ENCODE measurements at regions of chr1 and their contacts with region 1.

Region 1: DNA sequence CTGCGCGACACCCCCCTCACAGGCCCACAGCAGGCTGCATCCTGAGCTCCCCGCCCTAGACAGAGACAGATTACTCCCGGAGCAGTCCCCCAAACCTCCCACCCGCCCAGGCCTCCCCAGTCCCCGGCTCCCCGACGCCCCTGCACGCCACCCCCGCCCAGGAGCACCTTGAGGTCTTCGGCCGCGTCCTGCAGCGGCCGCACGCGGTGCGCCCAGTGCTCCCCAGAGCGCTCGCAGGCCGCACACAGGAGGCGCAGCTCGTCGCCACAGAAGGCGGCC is 709 bp downstream of the TRIM11 start:
- DNase-seq: no peak
- ATAC-seq: no peak
- H3K4me3 ChIP-seq: peak overlapping the region; percentile 38 to 89 (median 81)
- H3K4me3 Mint-ChIP-seq: peak overlapping the region; percentile 92
- H3K27ac ChIP-seq: peak overlapping the region in 1 of 2 donors; percentile 83
- H3K27ac Mint-ChIP-seq: peak overlapping the region; percentile 81
- H3K4me1 ChIP-seq: peaks cover 27 to 39% of the 10 kb centered on the region in 2 donors
- H3K4me1 Mint-ChIP-seq: peaks cover 47% of the 10 kb centered on the region
- H3K27me3 ChIP-seq: no peaks in the 10 kb centered on the region
- H3K27me3 Mint-ChIP-seq: no peaks in the 10 kb centered on the region
- CTCF ChIP-seq: no peak

Region 2: GRCh38 chr1:228041316-228041715 is 364.6 kb before region 1 on chr1:
- CTCF ChIA-PET with region 1: no interaction called
- POLR2A ChIA-PET with region 1: interaction called, 12 read pairs
- intact Hi-C with region 1: no loop called
- DNase-seq: no peak
- ATAC-seq: no peak
- H3K4me3 ChIP-seq: no peak overlapping the region
- H3K4me3 Mint-ChIP-seq: no peak overlapping the region
- H3K27ac ChIP-seq: no peak overlapping the region
- H3K27ac Mint-ChIP-seq: no peak overlapping the region
- H3K4me1 ChIP-seq: peaks cover 6 to 15% of the 10 kb centered on the region in 2 donors
- H3K4me1 Mint-ChIP-seq: peaks cover 2% of the 10 kb centered on the region
- H3K27me3 ChIP-seq: peaks cover 0 to 31% (median 18%) of the 10 kb centered on the region in 4 experiments
- H3K27me3 Mint-ChIP-seq: peaks cover 17% of the 10 kb centered on the region
- CTCF ChIP-seq: no peak

Region 3: DNA sequence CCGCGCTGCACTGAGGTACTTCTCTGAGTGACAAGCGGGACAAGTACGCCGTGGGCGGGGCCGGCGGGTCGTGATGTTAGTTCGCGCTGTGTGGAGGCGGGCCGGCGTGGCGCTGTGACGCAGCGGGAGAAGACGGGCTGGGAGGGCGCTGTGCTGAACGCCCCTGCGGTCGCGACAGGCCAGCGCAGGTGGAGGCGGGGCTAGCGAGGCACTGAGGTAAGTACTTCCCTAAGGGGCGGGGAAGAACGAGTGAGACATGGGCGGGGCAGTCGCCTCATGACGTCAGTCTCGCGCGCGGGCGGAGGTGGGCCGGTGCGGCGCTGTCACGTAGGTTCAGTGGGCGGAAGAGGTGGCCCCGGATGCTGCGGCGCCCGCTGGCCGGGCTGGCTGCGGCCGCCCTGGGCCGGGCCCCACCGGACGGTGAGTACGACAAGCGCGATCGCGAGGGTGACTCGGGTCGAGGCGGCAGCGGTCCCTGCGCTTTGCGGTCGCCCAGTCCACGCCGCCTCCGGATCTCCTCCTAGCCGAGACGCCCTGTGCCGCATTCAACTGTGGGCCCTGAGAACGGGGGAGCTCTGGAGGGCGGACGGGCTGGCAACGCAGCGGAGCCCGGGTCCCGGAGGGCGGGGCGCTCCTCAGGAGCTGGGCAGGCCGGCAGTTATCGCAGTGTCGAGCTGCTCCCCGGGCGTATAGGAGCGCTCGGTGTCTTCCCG is 265.8 kb before region 1 on chr1 and contains the start of gene GUK1:
- CTCF ChIA-PET with region 1: no interaction called
- POLR2A ChIA-PET with region 1: interaction called, 3 read pairs
- intact Hi-C with region 1: loop called (anchors 2 kb)
- DNase-seq: peak; percentile 100
- ATAC-seq: peak; percentile 91
- H3K4me3 ChIP-seq: peak within 1 kb of the TSS; percentile 70 to 87 (median 82)
- H3K4me3 Mint-ChIP-seq: peak within 1 kb of the TSS; percentile 96
- H3K27ac ChIP-seq: peak within 1 kb of the TSS; percentile 95 to 98
- H3K27ac Mint-ChIP-seq: peak within 1 kb of the TSS; percentile 100
- H3K4me1 ChIP-seq: peaks cover 55 to 74% of the 10 kb centered on the region in 2 donors
- H3K4me1 Mint-ChIP-seq: peaks cover 68% of the 10 kb centered on the region
- H3K27me3 ChIP-seq: no peaks in the 10 kb centered on the region
- H3K27me3 Mint-ChIP-seq: no peaks in the 10 kb centered on the region
- CTCF ChIP-seq: no peak
- total RNA-seq, gene GUK1: 123 and 125 TPM in 2 replicates

Region 4: DNA sequence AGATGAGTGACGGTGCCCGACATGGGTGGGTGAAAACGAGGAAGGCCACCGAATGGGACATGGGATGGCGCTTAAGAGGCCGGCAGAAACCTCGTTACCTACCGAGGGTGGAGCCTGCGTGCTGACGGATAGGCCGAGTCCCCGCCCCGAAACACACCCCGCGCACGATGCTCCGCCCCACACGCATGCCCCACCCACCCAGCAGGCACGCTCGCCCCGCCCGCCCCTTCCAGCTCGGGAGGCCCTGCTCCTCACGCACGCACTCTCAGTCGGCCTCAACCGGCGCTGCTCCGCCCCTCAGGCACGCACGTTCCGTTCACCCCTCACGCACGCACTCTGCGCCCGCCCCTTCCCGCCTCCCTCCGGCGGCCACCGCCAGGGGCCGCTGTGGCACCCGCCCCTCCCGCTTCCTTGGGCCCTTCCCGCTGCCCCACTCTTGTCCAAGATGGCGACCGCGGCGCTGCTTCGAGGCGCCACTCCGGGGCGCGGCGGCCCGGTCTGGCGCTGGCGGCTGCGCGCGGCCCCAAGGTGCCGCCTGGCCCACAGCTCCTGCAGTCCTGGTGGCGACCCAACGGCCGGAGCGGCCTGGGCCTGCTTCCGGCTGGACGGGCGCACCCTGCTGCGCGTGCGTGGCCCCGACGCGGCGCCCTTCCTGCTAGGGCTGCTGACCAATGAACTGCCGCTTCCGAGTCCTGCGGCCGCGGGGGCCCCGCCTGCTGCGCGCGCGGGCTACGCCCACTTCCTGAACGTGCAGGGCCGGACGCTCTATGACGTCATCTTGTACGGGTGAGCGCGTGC is 240.4 kb before region 1 on chr1 and contains the start of gene IBA57:
- CTCF ChIA-PET with region 1: interaction called, 3 read pairs
- POLR2A ChIA-PET with region 1: interaction called, 12 read pairs
- intact Hi-C with region 1: loop called (anchors 2 kb)
- DNase-seq: peak; percentile 100
- ATAC-seq: peak; percentile 84
- H3K4me3 ChIP-seq: peak within 1 kb of the TSS; percentile 64 to 88 (median 74)
- H3K4me3 Mint-ChIP-seq: peak within 1 kb of the TSS; percentile 93
- H3K27ac ChIP-seq: peak within 1 kb of the TSS; percentile 95 to 98
- H3K27ac Mint-ChIP-seq: peak within 1 kb of the TSS; percentile 99
- H3K4me1 ChIP-seq: peaks cover 14 to 26% of the 10 kb centered on the region in 2 donors
- H3K4me1 Mint-ChIP-seq: peaks cover 28% of the 10 kb centered on the region
- H3K27me3 ChIP-seq: peaks cover 0 to 5% (median 0%) of the 10 kb centered on the region in 4 experiments
- H3K27me3 Mint-ChIP-seq: no peaks in the 10 kb centered on the region
- CTCF ChIP-seq: peak; percentile 73
- total RNA-seq, gene IBA57: 12.8 and 15.3 TPM in 2 replicates

Region 5: GRCh38 chr1:228383773-228384172 is 22.2 kb before region 1 on chr1:
- CTCF ChIA-PET with region 1: no interaction called
- POLR2A ChIA-PET with region 1: no interaction called
- intact Hi-C with region 1: no loop called
- DNase-seq: no peak
- ATAC-seq: no peak
- H3K4me3 ChIP-seq: no peak overlapping the region
- H3K4me3 Mint-ChIP-seq: no peak overlapping the region
- H3K27ac ChIP-seq: no peak overlapping the region
- H3K27ac Mint-ChIP-seq: no peak overlapping the region
- H3K4me1 ChIP-seq: peaks cover 5% of the 10 kb centered on the region in 2 donors
- H3K4me1 Mint-ChIP-seq: peaks cover 5% of the 10 kb centered on the region
- H3K27me3 ChIP-seq: peaks cover 0 to 13% (median 5%) of the 10 kb centered on the region in 4 experiments
- H3K27me3 Mint-ChIP-seq: peaks cover 13% of the 10 kb centered on the region
- CTCF ChIP-seq: no peak

Region 6: GRCh38 chr1:228457396-228458176 is 51.7 kb after region 1 on chr1:
- CTCF ChIA-PET with region 1: no interaction called
- POLR2A ChIA-PET with region 1: interaction called, 3 read pairs
- intact Hi-C with region 1: loop called (anchors 1 kb)
- DNase-seq: peak; percentile 90
- ATAC-seq: peak; percentile 88
- H3K4me3 ChIP-seq: peak overlapping the region in 4 of 5 experiments; percentile 44 to 58 (median 48)
- H3K4me3 Mint-ChIP-seq: peak overlapping the region; percentile 92
- H3K27ac ChIP-seq: peak overlapping the region; percentile 72 to 79
- H3K27ac Mint-ChIP-seq: peak overlapping the region; percentile 98
- H3K4me1 ChIP-seq: peaks cover 24 to 30% of the 10 kb centered on the region in 2 donors
- H3K4me1 Mint-ChIP-seq: peaks cover 27% of the 10 kb centered on the region
- H3K27me3 ChIP-seq: peaks cover 0 to 44% (median 17%) of the 10 kb centered on the region in 4 experiments
- H3K27me3 Mint-ChIP-seq: peaks cover 37% of the 10 kb centered on the region
- CTCF ChIP-seq: no peak

Region 7: DNA sequence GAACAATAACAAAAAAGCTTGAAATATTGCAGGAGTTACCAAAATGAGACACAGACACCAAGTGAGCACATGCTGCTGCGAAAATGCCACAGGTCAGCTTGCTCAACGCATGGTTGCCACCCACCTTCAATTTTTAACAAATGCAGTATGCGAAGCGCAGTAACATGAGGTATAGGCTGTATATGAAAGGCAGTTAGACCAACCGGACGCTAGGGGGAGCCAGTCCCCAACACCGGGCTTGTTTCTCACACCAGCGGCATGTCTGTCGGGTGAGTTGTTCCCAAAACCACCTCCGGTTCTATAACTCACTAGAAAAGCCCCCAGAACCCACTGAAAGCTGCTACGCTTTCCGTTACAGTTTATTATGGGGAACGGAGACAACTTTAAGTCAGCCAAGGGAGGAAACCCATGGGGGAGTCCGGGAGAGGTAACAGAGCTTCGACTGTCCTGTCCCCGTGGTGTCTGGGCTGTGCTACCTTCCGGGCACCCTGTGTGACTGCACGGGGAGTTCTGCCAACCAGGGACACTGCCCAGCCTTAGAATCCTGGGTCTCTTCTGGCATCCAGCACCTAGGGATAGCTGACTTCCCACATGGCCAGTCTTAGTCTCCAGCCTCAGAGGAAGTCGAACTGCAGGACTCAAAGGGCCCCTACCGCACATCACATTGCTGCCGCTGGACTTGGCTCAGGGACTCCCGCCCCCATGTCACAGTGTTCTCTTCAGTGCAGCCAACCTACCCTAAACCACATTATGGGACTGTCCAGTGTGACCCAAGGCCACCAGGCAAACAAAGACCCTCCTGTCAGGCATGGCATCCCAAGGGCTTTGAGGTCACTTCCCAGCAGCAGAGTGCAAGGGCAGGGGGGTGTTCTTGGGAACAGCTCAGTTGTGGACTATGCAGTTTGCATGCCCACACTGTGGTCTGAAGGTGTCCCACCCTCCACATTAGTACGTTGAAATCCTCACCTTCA is 95.3 kb after region 1 on chr1:
- CTCF ChIA-PET with region 1: no interaction called
- POLR2A ChIA-PET with region 1: no interaction called
- intact Hi-C with region 1: loop called (anchors 5 kb)
- DNase-seq: peak; percentile 90
- ATAC-seq: peak; percentile 94
- H3K4me3 ChIP-seq: peak overlapping the region in 4 of 5 experiments; percentile 26 to 51 (median 47)
- H3K4me3 Mint-ChIP-seq: peak overlapping the region; percentile 83
- H3K27ac ChIP-seq: peak overlapping the region; percentile 51 to 54
- H3K27ac Mint-ChIP-seq: peak overlapping the region; percentile 86
- H3K4me1 ChIP-seq: peaks cover 20% of the 10 kb centered on the region in 2 donors
- H3K4me1 Mint-ChIP-seq: peaks cover 20% of the 10 kb centered on the region
- H3K27me3 ChIP-seq: peaks cover 0 to 3% (median 0%) of the 10 kb centered on the region in 4 experiments
- H3K27me3 Mint-ChIP-seq: peaks cover 6% of the 10 kb centered on the region
- CTCF ChIP-seq: peak; percentile 91

Region 8: DNA sequence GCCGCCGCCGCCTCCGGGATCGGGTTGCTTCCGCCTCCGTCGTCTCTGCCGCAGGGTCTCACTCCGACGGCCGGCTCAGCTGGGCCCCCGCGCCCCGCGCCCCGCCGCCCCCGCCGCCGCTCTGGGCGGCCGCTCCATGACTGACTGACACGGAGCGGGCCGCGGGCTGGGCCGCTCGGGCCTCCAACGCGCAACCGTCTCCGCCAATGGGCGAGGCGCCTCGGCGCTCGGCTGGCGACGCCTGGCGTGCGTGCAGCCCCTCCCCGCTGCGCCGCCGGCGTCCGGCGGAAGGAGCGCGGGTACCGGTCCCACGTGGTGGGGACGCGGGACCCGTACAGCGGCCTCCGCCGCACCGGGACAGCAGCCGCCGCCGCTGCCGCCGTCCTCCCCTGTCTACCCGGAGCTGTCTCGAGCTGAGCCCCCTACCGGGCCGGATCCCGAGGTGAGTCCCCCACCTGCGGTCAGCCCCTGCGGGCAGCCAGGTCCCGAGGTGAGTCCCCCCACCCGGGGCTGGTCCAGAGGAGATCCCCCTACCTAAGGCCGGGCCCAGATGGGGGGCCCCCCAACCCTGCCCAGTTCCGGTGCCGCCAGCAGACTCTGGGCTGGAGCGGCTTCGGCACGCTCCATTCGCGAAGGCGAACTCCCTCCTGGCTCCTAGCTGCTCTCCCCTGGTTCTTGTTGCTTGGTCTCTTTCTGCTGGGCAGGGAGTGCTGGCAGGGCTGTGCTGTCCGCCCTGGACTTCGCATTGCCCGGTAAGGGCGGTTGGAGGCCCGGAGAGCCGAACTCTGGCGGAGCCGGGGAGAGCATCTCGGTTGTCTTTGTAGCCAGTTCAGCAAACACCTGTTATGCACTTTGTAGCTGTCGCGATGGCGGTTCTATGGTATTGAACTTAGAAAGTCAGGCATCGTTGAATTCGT is 1220.2 kb after region 1 on chr1 and contains the starts of genes TAF5L and URB2:
- CTCF ChIA-PET with region 1: no interaction called
- POLR2A ChIA-PET with region 1: no interaction called
- intact Hi-C with region 1: loop called (anchors 5 kb)
- DNase-seq: peak; percentile 90
- ATAC-seq: peak; percentile 92
- H3K4me3 ChIP-seq: peak within 1 kb of the TSS; percentile 74 to 91 (median 86)
- H3K4me3 Mint-ChIP-seq: peak within 1 kb of the TSS; percentile 98
- H3K27ac ChIP-seq: peak within 1 kb of the TSS; percentile 58 to 82
- H3K27ac Mint-ChIP-seq: peak within 1 kb of the TSS; percentile 93
- H3K4me1 ChIP-seq: peaks cover 25 to 28% of the 10 kb centered on the region in 2 donors
- H3K4me1 Mint-ChIP-seq: peaks cover 48% of the 10 kb centered on the region
- H3K27me3 ChIP-seq: no peaks in the 10 kb centered on the region
- H3K27me3 Mint-ChIP-seq: no peaks in the 10 kb centered on the region
- CTCF ChIP-seq: no peak
- total RNA-seq, gene TAF5L: 21.2 and 24.0 TPM in 2 replicates
- total RNA-seq, gene URB2: 9.6 and 11.2 TPM in 2 replicates